GM23248 (cell line): ENCODE measurements at regions of chr15 and their contacts with region 1.

Region 1: DNA sequence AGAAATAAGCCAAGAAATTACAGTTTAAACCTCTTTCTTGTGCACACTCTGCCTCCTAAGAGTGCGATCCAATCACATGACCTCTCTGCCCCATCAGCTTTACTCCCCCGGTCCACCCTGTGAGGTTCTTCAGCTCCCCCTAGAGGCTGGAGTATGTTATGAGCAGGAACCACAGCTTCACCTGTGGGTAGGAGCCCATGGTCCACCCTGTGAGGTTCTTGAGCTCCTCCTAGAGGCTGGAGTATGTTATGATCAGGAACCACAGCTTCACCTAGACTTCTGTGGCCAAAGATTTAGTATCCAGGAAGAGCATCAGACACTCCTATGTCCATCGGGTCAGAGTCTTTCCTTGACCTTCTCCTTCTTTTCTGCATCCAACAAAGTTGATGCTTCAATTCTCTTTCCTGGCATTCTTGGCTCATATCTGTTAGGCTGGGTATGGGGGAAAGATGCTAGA is 163.9 kb downstream of the MINAR1 start:
- DNase-seq: peak; percentile 88
- H3K4me3 ChIP-seq: no peak overlapping the region
- H3K27ac ChIP-seq: no peak overlapping the region
- H3K4me1 ChIP-seq: no peaks in the 10 kb centered on the region
- H3K27me3 ChIP-seq: peaks cover 4% of the 10 kb centered on the region; the same call in 1 of the 2 replicates

Region 2: DNA sequence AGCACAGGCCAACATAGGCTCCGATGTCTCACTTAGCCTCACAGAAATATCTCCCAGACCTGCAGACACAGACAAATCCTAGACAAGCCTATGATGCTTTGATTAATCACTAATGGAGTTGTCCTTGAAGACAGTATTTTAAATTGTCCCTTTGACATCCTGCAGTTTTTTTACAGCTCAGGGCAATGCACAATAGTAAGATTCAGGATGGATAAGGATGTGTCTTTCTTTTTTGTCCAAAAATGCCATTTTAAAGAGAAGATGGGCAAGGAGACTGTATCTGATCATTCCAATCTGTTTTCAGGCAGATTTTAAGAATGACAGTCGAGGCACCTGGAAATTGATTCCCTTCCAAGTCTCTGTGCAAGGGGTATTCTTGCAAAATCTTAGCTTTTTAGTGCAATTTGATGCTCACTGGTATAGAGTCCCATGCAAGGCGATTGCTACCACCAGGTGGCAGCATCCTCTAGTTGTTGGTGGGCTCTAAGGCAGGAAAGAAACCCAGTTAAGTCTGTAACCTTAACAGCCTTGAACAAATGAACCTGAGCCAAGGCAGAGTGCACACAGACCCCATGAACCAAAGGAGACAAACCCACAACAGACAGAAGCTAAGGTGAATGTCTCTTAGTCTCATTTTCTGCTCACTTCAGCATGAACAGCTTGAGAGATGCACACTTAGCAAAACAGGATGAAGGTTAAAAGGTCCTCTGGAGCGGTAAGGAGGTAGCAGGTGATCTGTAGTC is 215.2 kb before region 1 on chr15:
- in situ Hi-C with region 1: loop called (anchors 5 kb)
- DNase-seq: peak; percentile 73
- H3K4me3 ChIP-seq: no peak overlapping the region
- H3K27ac ChIP-seq: no peak overlapping the region
- H3K4me1 ChIP-seq: no peaks in the 10 kb centered on the region
- H3K27me3 ChIP-seq: no peaks in the 10 kb centered on the region

Region 3: DNA sequence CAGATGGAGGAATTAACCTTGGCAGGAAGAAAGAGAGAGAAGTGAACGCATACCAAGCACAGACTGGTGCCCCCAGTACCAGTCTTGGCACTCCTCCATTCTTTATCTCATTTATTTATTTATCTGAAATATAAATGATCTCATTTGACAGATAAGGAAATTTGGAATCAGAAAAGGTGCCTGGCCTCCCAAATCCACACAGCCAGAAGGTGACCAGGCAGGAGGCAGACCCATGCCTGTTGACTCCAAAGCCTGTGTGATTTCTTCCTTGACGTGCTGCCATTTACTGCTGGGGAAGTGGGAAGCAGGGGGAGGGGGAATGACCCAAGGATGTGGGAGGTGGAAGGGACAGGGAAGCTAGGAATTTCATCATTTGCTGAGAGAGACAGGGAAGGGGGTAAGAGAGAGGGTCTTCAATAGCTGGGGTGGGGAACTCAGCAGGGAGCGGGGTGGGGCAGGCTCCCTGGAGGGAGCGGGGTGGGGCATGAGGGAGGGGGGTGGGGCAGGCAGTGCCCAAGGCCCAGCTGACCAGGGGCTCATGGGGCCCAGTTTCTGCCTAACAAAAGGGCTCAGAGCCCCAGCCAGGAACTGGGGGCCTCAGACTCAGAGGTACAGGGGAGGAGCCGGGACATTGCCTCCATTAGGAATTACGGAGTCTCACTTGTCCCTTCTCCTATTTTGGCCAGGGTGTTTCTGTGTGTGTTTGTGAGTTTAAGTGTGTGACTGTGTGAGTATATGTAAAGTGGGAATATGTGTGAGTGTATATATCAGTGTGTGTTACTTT is 100.9 kb before region 1 on chr15:
- in situ Hi-C with region 1: no loop called
- DNase-seq: no peak
- H3K4me3 ChIP-seq: no peak overlapping the region
- H3K27ac ChIP-seq: no peak overlapping the region
- H3K4me1 ChIP-seq: no peaks in the 10 kb centered on the region
- H3K27me3 ChIP-seq: no peaks in the 10 kb centered on the region; the same call in 1 of the 2 replicates

Region 4: DNA sequence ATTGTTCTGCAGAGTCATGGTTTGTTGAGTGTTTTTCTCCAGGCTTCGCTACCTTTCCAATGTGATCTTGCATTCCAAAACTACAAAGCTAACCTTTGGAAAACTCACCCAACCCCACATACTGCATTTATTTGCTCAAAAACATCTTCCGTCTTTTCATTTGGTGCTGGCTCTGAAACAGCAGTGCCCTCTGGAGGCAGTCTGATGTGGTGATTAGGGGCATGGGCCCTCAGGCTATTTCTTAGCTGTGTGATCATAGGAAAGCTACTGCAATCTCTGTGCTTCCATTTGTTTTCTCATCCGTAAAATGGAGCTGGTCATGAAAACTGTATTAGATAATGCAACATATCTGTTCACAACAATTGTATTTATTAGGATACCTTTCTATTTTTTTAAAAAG is 253.7 kb after region 1 on chr15:
- in situ Hi-C with region 1: loop called (anchors 10 kb)
- DNase-seq: peak; percentile 77
- H3K4me3 ChIP-seq: no peak overlapping the region
- H3K27ac ChIP-seq: no peak overlapping the region
- H3K4me1 ChIP-seq: peaks cover 4% of the 10 kb centered on the region; the same call in 1 of the 2 replicates
- H3K27me3 ChIP-seq: no peaks in the 10 kb centered on the region